IMR-90 (cell line): ENCODE measurements at regions of chr1 and their contacts with region 1.

Region 1: GRCh38 chr1:104780470-104781078 is 1030.9 kb downstream of the AMY1C start:
- DNase-seq: peak; percentile 1
- ATAC-seq: no peak
- H3K4me3 ChIP-seq: no peak overlapping the region
- H3K27ac ChIP-seq: no peak overlapping the region
- H3K4me1 ChIP-seq: no peaks in the 10 kb centered on the region
- H3K27me3 ChIP-seq: no peaks in the 10 kb centered on the region
- CTCF ChIP-seq: peak; percentile 66
- POLR2A ChIP-seq: no peak
- RAD21 ChIP-seq: peak; percentile 71

Region 2: GRCh38 chr1:105793536-105794146 is 1013.1 kb after region 1 on chr1:
- CTCF ChIA-PET with region 1: no interaction called
- POLR2A ChIA-PET with region 1: no interaction called
- dilution Hi-C with region 1: no loop called
- in situ Hi-C with region 1: no loop called
- intact Hi-C with region 1: loop called (anchors 10 kb)
- DNase-seq: no peak
- ATAC-seq: no peak
- H3K4me3 ChIP-seq: no peak overlapping the region
- H3K27ac ChIP-seq: no peak overlapping the region
- H3K4me1 ChIP-seq: no peaks in the 10 kb centered on the region
- H3K27me3 ChIP-seq: no peaks in the 10 kb centered on the region
- CTCF ChIP-seq: peak; percentile 37
- POLR2A ChIP-seq: no peak
- RAD21 ChIP-seq: peak; percentile 45